ENCODE measurements at regions of chr7 and their contacts with region 1.

Region 1: DNA sequence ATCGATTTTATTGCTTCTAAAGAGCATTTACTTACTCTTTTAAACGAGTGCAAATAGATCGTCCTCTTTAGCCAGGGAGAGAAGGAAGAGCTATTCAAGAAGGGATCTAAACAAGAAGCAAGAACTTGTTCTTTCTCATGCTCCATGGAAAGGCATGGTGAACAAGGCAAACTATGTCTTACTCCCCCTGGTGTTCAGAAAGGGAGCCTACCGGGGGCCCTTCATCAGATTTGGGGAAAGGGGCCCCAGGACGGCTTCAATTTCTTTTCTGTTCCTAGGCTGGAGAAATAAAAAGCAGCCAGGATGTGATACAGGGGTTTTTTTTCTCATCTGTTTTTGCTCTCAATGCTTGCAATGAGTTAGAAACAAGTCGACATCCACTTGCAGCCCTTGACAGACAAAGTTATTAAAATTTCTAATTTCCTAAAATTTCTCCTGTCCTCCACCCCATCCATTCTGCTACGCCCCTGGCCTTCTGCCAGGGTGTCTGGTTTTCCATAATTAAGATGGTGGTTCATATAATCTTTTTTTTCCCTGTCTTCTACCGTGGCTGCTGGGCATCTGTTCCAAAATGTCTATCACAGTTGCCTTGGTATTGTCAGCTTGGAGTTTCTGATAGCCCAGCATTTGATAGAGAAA is 214.4 kb downstream of the CREB5 start:
- H3K4me3 Mint-ChIP-seq: no peak overlapping the region
- H3K27ac Mint-ChIP-seq: no peak overlapping the region
- H3K4me1 Mint-ChIP-seq: peaks cover 18% of the 10 kb centered on the region
- H3K27me3 Mint-ChIP-seq: peaks cover 25% of the 10 kb centered on the region

Region 2: GRCh38 chr7:28389504-28390395 is 237.0 kb before region 1 on chr7:
- intact Hi-C with region 1: loop called (anchors 1 kb)
- H3K4me3 Mint-ChIP-seq: peak overlapping the region; percentile 33
- H3K27ac Mint-ChIP-seq: peak overlapping the region; percentile 42
- H3K4me1 Mint-ChIP-seq: peaks cover 5% of the 10 kb centered on the region
- H3K27me3 Mint-ChIP-seq: peaks cover 38% of the 10 kb centered on the region

Region 3: GRCh38 chr7:28647081-28647421 is 20.3 kb after region 1 on chr7:
- intact Hi-C with region 1: no loop called
- H3K4me3 Mint-ChIP-seq: no peak overlapping the region
- H3K27ac Mint-ChIP-seq: no peak overlapping the region
- H3K4me1 Mint-ChIP-seq: no peaks in the 10 kb centered on the region
- H3K27me3 Mint-ChIP-seq: peaks cover 6% of the 10 kb centered on the region